Activated B cell treated with CpG ODN at 0.5 μM for 24 hours (primary cell): ENCODE measurements at regions of chr6 and their contacts with region 1.

Region 1: GRCh38 chr6:30483677-30484279 is 5.5 kb upstream of the HLA-E start:
- DNase-seq: no peak
- ATAC-seq: no peak
- H3K4me3 Mint-ChIP-seq: no peak overlapping the region
- H3K27ac Mint-ChIP-seq: no peak overlapping the region
- H3K4me1 Mint-ChIP-seq: peaks cover 33% of the 10 kb centered on the region
- H3K27me3 Mint-ChIP-seq: peaks cover 26% of the 10 kb centered on the region
- CTCF ChIP-seq: peak; percentile 58

Region 2: DNA sequence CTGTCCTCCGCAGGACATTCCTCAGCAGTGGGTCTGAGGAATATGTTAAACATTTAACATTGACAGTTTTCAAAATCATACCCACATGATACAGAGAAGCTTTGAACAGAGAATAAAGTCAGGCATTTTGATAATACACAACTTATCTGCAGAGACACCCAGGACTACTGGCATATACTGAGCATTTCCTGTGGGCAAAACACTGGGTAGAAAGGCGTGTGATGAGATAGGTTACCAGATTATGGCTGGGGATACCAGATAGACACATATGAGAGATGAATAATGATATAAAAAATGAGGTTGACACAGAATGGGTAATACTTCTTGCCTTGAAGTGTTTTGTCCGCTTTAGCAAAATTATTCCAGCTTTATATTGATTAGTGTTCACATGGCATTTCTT is 239.2 kb before region 1 on chr6:
- CTCF ChIA-PET with region 1: no interaction called
- POLR2A ChIA-PET with region 1: no interaction called
- intact Hi-C with region 1: no loop called
- DNase-seq: no peak
- ATAC-seq: no peak
- H3K4me3 Mint-ChIP-seq: no peak overlapping the region
- H3K27ac Mint-ChIP-seq: no peak overlapping the region
- H3K4me1 Mint-ChIP-seq: no peaks in the 10 kb centered on the region
- H3K27me3 Mint-ChIP-seq: peaks cover 15% of the 10 kb centered on the region
- CTCF ChIP-seq: no peak

Region 3: DNA sequence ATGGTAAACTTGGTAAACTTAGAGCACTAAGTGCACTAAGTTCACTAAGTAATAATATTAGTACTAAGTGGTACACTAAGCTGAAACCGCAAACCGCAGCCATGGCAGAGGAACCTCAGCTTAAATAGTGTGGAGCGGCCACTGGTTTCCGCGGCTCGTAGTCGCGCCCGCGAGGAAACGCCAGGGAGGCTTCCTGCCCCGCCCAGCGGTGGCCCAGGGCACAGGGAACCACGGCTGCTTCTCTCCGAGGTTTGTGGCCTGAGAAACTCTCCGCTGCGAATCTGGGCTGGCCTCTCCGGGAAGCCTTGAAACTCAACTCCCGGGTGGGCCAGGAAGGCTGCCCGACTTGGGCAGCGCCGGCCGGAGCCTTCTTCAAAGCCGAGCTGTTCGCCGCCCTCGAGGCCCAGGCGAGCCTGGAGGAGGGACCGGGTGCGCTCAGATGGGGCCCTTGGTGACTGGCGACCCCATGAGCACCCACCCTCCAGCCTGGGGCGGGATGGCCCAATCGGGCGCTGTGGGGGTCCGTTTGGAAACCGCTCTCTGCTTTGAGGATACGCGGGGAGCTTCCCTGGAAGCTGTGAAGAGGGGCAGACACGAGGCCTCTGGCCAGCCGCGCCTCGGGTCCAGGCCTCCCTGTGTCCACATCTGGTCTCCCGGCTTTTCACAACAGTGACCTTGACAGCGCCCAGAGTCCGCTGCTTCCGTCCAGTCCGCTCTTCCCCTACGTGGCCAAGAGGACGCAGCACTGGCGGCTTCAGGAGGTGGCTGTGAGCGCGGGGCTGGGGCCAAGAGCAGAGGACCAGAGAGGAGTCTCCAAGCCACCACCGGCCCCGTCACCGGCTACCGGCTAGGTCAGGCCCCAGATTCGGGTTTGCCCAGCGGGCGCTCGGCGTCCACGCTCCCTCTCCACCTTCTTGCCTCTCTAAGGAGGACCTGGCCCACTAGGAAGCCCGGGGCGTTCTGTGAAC is 19.8 kb before region 1 on chr6:
- CTCF ChIA-PET with region 1: interaction called, 12 read pairs
- POLR2A ChIA-PET with region 1: interaction called, 3 read pairs
- intact Hi-C with region 1: no loop called
- DNase-seq: peak; percentile 46
- ATAC-seq: peak; percentile 48
- H3K4me3 Mint-ChIP-seq: peak overlapping the region; percentile 58
- H3K27ac Mint-ChIP-seq: no peak overlapping the region
- H3K4me1 Mint-ChIP-seq: peaks cover 37% of the 10 kb centered on the region
- H3K27me3 Mint-ChIP-seq: peaks cover 68% of the 10 kb centered on the region
- CTCF ChIP-seq: no peak

Region 4: GRCh38 chr6:30571075-30571768 is 87.4 kb after region 1 on chr6 and contains the start of gene ABCF1:
- CTCF ChIA-PET with region 1: interaction called, 17 read pairs
- POLR2A ChIA-PET with region 1: interaction called, 4 read pairs
- intact Hi-C with region 1: no loop called
- DNase-seq: peak; percentile 100
- ATAC-seq: peak; percentile 95
- H3K4me3 Mint-ChIP-seq: peak within 1 kb of the TSS; percentile 99
- H3K27ac Mint-ChIP-seq: peak within 1 kb of the TSS; percentile 96
- H3K4me1 Mint-ChIP-seq: peaks cover 53% of the 10 kb centered on the region
- H3K27me3 Mint-ChIP-seq: no peaks in the 10 kb centered on the region
- CTCF ChIP-seq: no peak
- total RNA-seq, gene ABCF1: 93.7 and 94.5 TPM in 2 replicates

Region 5: GRCh38 chr6:30672445-30673253 is 188.9 kb after region 1 on chr6 and contains the start of gene DHX16:
- CTCF ChIA-PET with region 1: interaction called, 12 read pairs
- POLR2A ChIA-PET with region 1: interaction called, 3 read pairs
- intact Hi-C with region 1: loop called (anchors 1 kb)
- DNase-seq: peak; percentile 80
- ATAC-seq: peak; percentile 88
- H3K4me3 Mint-ChIP-seq: peak within 1 kb of the TSS; percentile 91
- H3K27ac Mint-ChIP-seq: peak within 1 kb of the TSS; percentile 84
- H3K4me1 Mint-ChIP-seq: peaks cover 42% of the 10 kb centered on the region
- H3K27me3 Mint-ChIP-seq: no peaks in the 10 kb centered on the region
- CTCF ChIP-seq: peak; percentile 51
- total RNA-seq, gene DHX16: 42.3 and 50.4 TPM in 2 replicates

Region 6: DNA sequence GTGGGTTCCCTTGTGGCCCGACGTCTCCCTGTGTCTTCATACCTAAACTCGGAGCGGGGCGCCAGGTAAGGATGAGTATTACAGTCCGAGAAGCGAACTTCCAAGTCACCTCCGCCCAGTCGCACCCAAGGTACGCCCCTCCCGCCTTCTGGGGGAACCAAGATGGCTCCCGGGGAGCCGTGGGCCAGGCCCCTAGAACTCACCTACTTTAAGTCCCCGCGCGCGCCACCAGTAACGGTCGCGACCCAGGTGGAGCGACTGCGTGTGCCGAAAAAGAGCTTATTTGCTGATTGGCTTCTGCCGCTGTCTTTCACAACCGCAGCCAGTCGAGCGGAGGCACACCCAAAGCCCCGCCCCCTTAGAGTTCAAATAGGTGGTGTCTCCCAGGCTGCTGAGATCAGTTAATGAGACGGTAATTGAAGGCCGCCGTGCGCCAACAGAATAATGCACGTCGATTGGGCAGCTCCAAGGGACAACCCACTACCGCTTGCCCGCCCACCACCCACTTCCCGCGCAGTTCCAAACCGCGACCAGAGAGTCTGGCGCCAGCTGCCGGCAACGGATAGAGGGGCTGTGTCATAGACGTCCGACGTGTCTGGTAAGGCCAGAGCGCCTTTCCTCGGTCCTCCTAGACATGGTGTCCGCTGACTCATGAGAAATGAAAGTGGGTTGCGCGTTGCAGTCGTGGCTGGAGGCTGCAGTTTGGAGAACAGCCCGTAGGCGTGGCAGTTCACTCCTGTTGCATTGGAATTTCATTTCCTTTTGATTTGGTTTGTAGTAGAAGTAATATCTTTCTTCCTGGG is 233.5 kb after region 1 on chr6 and contains the start of gene MDC1:
- CTCF ChIA-PET with region 1: interaction called, 11 read pairs
- POLR2A ChIA-PET with region 1: interaction called, 3 read pairs
- intact Hi-C with region 1: loop called (anchors 2 kb)
- DNase-seq: peak; percentile 91
- ATAC-seq: peak; percentile 73
- H3K4me3 Mint-ChIP-seq: peak within 1 kb of the TSS; percentile 99
- H3K27ac Mint-ChIP-seq: peak within 1 kb of the TSS; percentile 99
- H3K4me1 Mint-ChIP-seq: peaks cover 57% of the 10 kb centered on the region
- H3K27me3 Mint-ChIP-seq: no peaks in the 10 kb centered on the region
- CTCF ChIP-seq: no peak
- total RNA-seq, gene MDC1: 62.4 and 65.6 TPM in 2 replicates

Region 7: DNA sequence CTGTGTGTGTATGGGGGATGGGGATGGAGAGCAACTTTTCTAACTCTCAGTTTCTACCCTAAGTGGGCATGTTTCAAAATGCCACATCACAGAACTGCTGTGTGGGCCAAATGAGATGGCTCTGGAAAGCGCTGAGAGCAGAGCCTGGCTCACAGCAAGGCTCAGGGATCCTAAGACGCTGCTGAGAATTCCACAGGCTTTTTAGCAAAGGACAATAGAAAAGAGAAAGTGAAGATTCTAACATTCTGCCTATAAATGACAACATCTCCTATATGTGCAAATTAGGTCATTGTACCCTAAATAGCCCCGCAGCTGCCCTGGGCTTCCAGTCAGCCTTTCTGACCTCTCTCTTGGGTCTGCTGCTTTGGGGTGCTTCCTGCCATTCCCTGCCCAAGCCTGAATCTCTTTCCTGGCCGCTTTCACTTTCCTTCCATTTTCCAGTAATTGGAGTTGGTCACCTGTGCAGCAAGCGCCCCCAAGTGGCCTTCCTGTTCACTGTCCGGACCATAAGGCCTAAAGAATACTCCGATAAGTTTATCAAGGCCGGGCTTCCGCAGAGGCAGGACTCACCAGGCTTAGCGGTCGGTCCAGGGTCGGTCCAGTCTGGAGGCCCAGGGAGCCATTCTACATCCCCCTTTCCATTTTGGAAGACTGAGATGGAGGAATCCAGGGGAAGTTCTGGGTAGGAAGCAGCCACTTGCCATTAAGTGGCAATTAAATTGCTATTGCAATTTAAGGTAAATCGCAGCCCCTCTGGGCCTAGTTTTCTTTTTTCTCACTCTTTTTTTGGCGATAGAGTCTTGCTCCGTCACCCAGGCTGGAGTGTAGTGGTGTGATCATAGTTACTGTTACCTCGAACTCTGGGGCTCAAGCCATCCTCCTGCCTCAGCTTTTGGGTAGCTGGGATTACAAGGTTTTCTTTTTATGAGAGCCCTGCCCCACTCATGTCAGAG is 393.9 kb after region 1 on chr6:
- CTCF ChIA-PET with region 1: no interaction called
- POLR2A ChIA-PET with region 1: no interaction called
- intact Hi-C with region 1: loop called (anchors 2 kb)
- DNase-seq: peak; percentile 51
- ATAC-seq: peak; percentile 84
- H3K4me3 Mint-ChIP-seq: no peak overlapping the region
- H3K27ac Mint-ChIP-seq: no peak overlapping the region
- H3K4me1 Mint-ChIP-seq: peaks cover 37% of the 10 kb centered on the region
- H3K27me3 Mint-ChIP-seq: no peaks in the 10 kb centered on the region
- CTCF ChIP-seq: peak; percentile 19